Mammary epithelial cell (primary cell): ENCODE measurements at regions of chr2 and their contacts with region 1.

Region 1: DNA sequence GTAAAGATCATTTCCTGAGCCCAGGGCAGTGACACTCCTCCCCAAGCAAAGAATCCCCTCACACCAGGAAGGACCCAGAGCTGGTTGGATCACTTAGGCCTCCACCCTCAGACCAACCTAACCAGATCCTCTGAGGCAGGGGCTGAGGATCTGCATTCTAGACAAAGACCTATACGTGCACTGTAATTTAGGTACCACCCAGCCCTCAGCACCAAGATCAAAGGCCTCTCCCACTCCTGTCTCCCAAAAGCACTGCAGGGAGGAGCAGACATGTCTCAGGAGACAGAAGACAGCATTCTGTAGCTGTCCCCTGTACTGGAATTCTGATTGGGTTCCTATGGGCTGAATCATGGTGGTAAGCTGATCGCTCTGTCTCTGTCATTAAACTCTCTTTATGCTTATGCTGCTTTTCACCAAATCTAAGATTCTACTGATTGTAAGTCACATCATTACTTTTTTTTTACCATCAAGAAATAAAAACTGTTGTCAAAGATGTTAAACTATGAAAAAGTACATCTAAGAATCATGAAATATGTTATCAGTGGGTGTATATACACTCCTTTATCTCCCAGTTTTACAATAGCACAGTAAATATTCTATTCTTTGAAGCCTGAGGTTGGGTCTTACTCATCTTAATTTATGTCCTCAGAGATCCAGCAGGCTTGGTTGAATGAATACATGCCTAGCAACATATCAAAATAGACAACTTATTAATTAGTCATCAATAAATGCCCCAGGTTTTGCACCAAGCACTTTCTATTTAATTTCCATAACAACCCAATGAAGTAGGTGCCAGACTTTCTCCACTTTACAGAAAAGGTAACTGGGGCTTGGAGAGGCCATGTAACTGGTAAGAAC is 28.3 kb downstream of the MCFD2 start:
- DNase-seq: no peak
- H3K4me3 ChIP-seq: no peak overlapping the region
- H3K27ac ChIP-seq: no peak overlapping the region
- H3K4me1 ChIP-seq: peaks cover 4% of the 10 kb centered on the region
- H3K27me3 ChIP-seq: no peaks in the 10 kb centered on the region
- CTCF ChIP-seq: no peak

Region 2: DNA sequence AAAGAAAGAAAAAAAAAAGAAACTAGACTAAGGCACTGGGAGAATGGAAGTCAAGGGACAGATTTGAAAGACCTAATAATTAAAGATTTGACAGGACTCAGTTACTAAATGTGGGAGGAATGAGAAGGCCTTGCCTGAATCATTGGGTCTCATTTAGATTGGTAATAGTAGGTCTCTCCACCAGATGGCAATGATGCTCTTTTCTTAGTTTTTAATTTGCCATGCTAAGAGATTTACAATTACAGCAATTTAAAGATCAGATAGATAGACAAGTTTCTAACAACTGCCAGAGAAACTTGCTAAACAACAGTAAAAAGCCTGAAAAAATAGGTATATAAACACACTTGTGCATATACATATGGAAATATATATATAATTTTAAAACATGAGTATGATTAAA is 254.9 kb before region 1 on chr2:
- CTCF ChIA-PET with region 1: no interaction called
- dilution Hi-C with region 1: no loop called
- in situ Hi-C with region 1: no loop called
- intact Hi-C with region 1: loop called (anchors 1 kb)
- DNase-seq: peak; percentile 41
- H3K4me3 ChIP-seq: no peak overlapping the region
- H3K27ac ChIP-seq: no peak overlapping the region
- H3K4me1 ChIP-seq: no peaks in the 10 kb centered on the region
- H3K27me3 ChIP-seq: peaks cover 8% of the 10 kb centered on the region
- CTCF ChIP-seq: peak; percentile 57 to 60

Region 3: DNA sequence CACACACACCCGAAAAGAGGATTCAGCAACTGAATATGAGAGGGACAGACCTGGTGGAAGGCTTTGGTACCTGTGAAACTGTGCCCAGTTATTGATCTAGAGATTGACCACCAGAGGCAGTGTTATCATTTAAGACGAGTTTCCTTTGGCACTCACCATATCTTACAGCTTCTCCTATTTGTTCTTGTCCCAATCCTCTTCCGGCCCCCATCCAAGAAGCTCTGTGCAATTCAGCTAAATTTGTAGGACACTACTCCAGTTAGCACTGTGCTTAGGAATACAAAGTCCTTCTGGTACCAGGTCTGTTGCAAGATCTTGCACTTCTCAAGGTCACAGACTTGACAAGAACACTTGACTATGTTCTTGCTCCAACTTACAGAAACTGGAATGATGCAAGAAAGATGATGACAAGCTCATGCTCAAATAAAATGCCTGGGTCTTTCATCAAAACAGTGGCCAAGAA is 230.2 kb before region 1 on chr2:
- CTCF ChIA-PET with region 1: no interaction called
- dilution Hi-C with region 1: no loop called
- in situ Hi-C with region 1: no loop called
- intact Hi-C with region 1: loop called (anchors 1 kb)
- DNase-seq: peak; percentile 25
- H3K4me3 ChIP-seq: no peak overlapping the region
- H3K27ac ChIP-seq: no peak overlapping the region
- H3K4me1 ChIP-seq: peaks cover 6% of the 10 kb centered on the region
- H3K27me3 ChIP-seq: no peaks in the 10 kb centered on the region
- CTCF ChIP-seq: peak; percentile 42 to 54